ENCODE measurements at regions of chr3 and their contacts with region 1.

Region 1: DNA sequence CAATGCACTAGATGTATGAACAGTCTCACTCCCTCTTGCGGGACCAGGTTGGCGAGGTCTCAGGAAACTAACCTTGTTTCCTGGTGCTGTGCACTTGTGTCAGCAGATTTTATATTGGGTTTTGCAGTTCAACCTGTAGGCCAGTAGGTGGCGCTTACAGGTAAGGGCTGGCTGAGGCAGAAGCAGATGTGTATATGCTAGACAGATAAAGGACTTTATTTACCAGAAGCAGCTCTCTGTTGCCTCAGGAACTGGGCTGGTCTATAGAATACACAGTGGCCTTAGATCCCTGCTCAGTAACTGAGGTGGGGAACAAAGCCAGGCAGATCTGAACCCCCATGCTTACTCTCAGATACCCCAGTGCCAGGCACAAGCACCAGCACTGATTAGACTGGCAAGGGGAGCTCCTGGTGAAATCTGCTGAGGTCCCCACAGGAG is 296.8 kb downstream of the DOCK3 start:
- DNase-seq: peak in 1 of 2 experiments; percentile 53
- H3K4me3 ChIP-seq: no peak overlapping the region
- H3K27ac ChIP-seq: no peak overlapping the region
- H3K4me1 ChIP-seq: no peaks in the 10 kb centered on the region
- H3K27me3 ChIP-seq: no peaks in the 10 kb centered on the region
- CTCF ChIP-seq: peak; percentile 57 to 92 (median 88)
- EP300 ChIP-seq: no peak
- POLR2A ChIP-seq: no peak
- RAD21 ChIP-seq: peak; percentile 93 to 99

Region 2: GRCh38 chr3:50749822-50750221 is 221.7 kb before region 1 on chr3:
- CTCF ChIA-PET with region 1: no interaction called
- POLR2A ChIA-PET with region 1: no interaction called
- DNase-seq: no peak
- H3K4me3 ChIP-seq: 0 out of 8 replicates have a peak overlapping the region, but pooled peaks of 1 of the 4 experiments have one; percentile 4
- H3K27ac ChIP-seq: no peak overlapping the region
- H3K4me1 ChIP-seq: peaks cover 0 to 12% (median 0%) of the 10 kb centered on the region in 4 experiments; a peak in 1 of 7 replicates
- H3K27me3 ChIP-seq: no peaks in the 10 kb centered on the region
- CTCF ChIP-seq: no peak
- EP300 ChIP-seq: no peak
- POLR2A ChIP-seq: no peak
- RAD21 ChIP-seq: no peak

Region 3: DNA sequence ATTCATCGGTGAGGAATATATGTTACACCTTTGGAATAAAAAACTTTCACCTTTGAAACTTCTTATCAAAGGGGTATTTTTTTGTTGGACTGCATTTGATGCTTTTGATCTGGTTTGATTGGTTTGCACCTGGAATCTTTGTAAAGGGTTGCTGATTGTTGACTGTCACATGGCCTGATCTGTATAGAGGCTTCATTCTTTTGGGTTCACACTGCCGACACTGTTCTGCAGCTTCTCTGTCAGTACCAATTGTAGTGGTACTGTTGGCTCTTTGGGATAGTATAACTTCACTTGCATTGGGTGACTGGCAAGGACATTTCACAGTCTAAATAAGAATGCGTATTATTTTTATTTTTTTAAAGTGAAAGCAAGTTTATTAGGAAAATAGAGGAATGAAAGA is 141.1 kb before region 1 on chr3:
- CTCF ChIA-PET with region 1: no interaction called
- POLR2A ChIA-PET with region 1: no interaction called
- DNase-seq: no peak
- H3K4me3 ChIP-seq: no peak overlapping the region
- H3K27ac ChIP-seq: no peak overlapping the region
- H3K4me1 ChIP-seq: peaks cover 0 to 4% (median 3%) of the 10 kb centered on the region in 4 experiments; a peak in 4 of 7 replicates
- H3K27me3 ChIP-seq: no peaks in the 10 kb centered on the region
- CTCF ChIP-seq: no peak
- EP300 ChIP-seq: no peak
- POLR2A ChIP-seq: no peak
- RAD21 ChIP-seq: no peak

Region 4: DNA sequence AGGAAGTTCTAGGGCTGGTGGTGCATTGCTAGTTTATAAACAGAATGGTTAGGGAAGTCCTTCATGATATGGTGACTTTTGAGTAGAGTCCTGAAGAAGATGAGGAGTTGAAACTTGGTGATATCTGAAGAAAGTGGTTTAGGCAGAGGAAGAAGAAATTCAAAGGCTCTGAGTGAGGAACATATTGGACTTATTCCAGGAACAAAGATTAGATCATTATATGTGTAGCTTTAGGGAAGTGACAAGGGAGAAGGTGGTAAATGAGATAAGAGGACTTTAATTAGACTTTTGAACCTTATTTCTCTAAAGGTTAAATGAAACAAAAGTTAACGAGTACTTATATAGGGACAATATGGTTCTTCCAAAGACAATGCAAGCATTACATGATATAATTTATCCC is 10.1 kb before region 1 on chr3:
- CTCF ChIA-PET with region 1: interaction called, 11 read pairs
- POLR2A ChIA-PET with region 1: no interaction called
- DNase-seq: no peak
- H3K4me3 ChIP-seq: no peak overlapping the region
- H3K27ac ChIP-seq: no peak overlapping the region
- H3K4me1 ChIP-seq: no peaks in the 10 kb centered on the region
- H3K27me3 ChIP-seq: peaks cover 0 to 1% (median 0%) of the 10 kb centered on the region in 4 experiments; a peak in 1 of 7 replicates
- CTCF ChIP-seq: no peak
- EP300 ChIP-seq: no peak
- POLR2A ChIP-seq: no peak
- RAD21 ChIP-seq: no peak

Region 5: DNA sequence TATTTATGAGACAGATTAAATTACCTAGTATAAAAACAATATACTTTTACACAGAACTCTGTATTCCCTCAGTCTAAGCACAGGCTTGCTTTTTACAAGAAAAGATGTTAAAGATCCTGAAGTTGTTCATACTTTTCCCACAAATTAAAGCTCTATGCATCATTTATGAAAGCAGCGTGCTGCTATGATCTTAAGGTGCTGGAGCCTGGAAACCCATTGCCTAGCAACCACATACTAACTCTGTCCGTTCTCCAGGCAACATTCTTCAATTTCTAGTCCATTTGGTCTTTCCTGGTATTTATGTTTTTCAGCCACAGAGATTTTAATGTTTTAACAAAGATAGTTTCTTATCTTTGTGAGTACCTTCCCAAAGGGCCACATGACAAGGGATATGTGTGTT is 15.2 kb after region 1 on chr3:
- CTCF ChIA-PET with region 1: interaction called, 18 read pairs
- POLR2A ChIA-PET with region 1: interaction called, 3 read pairs
- DNase-seq: no peak
- H3K4me3 ChIP-seq: no peak overlapping the region
- H3K27ac ChIP-seq: no peak overlapping the region
- H3K4me1 ChIP-seq: no peaks in the 10 kb centered on the region; a peak in 1 of 7 replicates
- H3K27me3 ChIP-seq: no peaks in the 10 kb centered on the region
- CTCF ChIP-seq: no peak
- EP300 ChIP-seq: no peak
- POLR2A ChIP-seq: no peak
- RAD21 ChIP-seq: no peak

Region 6: DNA sequence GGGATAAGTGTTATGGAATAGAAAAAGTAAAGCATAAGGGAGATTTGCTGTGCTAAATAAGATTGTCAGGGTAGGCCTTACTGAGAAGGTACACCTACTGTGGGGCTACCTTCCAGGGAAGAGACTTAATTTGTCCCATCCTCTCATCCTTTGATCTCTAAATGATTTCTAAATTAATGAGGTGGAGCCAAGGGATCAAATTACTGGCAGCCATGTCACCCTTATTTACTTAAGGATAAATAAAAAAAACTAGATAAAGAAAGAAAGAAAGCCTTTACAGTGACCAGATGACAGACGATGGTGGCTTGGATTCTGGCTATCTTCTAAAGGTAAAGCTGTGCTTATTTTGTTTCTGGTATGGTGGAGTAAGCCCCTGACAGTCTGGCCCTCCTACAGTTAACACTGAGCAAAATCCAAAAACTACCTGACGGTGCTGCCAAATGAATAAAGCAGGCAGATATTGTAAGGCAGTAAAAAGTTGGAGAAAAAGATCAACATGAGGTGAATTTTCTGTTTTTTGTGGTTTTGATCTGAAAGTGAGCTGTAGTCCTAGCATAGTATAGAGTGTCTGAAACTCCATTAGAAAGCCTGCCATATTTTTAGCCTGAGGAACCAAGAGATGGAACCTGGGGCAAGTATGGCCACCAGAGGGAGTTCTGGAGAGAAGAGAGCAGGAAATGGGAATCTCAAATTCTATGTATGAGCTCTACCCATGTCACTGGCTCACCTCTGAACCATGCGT is 128.5 kb after region 1 on chr3:
- CTCF ChIA-PET with region 1: interaction called, 19 read pairs
- POLR2A ChIA-PET with region 1: interaction called, 3 read pairs
- DNase-seq: peak; percentile 10 to 67
- H3K4me3 ChIP-seq: no peak overlapping the region
- H3K27ac ChIP-seq: no peak overlapping the region
- H3K4me1 ChIP-seq: no peaks in the 10 kb centered on the region
- H3K27me3 ChIP-seq: no peaks in the 10 kb centered on the region
- CTCF ChIP-seq: peak in 2 of 3 experiments; percentile 67 to 85; a peak in 3 of 4 replicates
- EP300 ChIP-seq: no peak
- POLR2A ChIP-seq: no peak
- RAD21 ChIP-seq: peak; percentile 72 to 77

Region 7: DNA sequence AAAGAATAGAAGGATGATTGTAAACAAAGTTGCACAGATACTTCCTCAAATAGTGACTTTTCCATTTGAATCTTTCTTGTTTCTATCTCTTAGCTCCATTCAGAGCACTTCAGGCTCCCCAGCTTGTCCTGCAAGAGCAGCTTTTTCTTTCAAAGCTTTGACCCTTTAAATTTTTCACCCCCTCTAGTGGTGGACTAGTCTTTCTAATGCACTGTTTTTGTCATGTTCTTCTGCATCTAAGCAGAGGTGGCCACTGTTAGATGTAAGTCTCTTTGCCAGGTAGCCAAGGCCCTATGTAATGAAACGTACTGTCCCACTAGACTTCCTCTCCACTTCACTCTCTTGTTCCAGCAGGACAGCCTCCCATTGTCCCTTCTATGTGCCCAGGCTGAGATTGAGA is 339.5 kb after region 1 on chr3:
- CTCF ChIA-PET with region 1: interaction called, 12 read pairs
- POLR2A ChIA-PET with region 1: no interaction called
- DNase-seq: no peak
- H3K4me3 ChIP-seq: no peak overlapping the region
- H3K27ac ChIP-seq: no peak overlapping the region
- H3K4me1 ChIP-seq: no peaks in the 10 kb centered on the region
- H3K27me3 ChIP-seq: peaks cover 0 to 1% (median 0%) of the 10 kb centered on the region in 4 experiments; a peak in 1 of 7 replicates
- CTCF ChIP-seq: peak in 2 of 3 experiments; percentile 23 to 35; a peak in 2 of 4 replicates
- EP300 ChIP-seq: no peak
- POLR2A ChIP-seq: no peak
- RAD21 ChIP-seq: peak; percentile 30 to 43; a peak in 3 of 4 replicates

Measured in H1 (cell line).